K562 (cell line): ENCODE measurements at regions of chrX and their contacts with region 1.

Region 1: DNA sequence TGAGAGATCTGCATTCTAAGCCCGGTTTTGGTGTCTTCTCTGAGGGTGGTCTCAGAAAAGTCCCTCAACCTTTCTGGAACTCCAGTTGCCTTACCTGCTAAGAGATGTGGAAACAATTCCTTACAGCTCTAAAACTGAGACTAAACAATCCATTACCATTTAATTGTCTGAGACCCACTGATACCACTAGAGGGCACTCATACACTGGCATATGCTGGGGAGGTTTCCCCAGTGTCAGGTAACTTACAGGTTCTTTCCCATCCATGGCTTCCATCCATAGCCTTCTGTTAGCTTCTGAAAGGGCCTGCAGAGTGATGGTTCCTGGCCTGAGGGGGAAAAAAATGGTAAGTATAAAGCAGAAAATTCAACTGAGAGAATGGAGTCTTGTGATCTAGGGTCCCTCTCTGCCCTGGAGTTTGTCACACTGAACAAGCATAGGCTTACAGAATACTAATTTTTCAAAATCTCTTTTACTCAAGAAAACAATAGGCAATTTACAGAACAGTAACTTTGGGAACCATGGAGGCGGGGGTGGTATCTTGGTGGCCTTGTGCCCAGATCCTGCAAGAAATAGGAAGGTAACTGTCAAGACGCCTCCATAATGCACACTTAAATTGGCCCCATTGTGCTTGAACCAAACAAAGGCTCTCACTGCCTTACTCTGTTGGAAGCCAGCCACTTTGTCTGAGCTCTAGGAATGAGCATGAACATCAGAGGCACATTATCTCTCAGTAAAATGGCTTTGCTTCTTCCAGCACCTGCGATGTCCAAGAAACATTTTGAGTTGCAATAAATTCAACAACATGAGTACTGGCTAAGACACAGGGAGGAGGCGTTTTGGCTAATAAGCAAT is 236.1 kb downstream of the OPHN1 start:
- DNase-seq: peak; percentile 49 to 63 (median 58)
- ATAC-seq: peak; percentile 83
- H3K4me3 ChIP-seq: no peak overlapping the region
- H3K27ac ChIP-seq: no peak overlapping the region
- H3K4me1 ChIP-seq: no peaks in the 10 kb centered on the region
- H3K27me3 ChIP-seq: no peaks in the 10 kb centered on the region
- CTCF ChIP-seq: peak; percentile 64 to 76 (median 70)
- EP300 ChIP-seq: no peak
- POLR2A ChIP-seq: no peak
- RAD21 ChIP-seq: peak; percentile 76 to 88

Region 2: GRCh38 chrX:68163441-68163840 is 33.7 kb before region 1 on chrX:
- CTCF ChIA-PET with region 1: no interaction called
- POLR2A ChIA-PET with region 1: no interaction called
- in situ Hi-C with region 1: no loop called
- intact Hi-C with region 1: no loop called
- DNase-seq: no peak
- ATAC-seq: no peak
- H3K4me3 ChIP-seq: no peak overlapping the region
- H3K27ac ChIP-seq: no peak overlapping the region
- H3K4me1 ChIP-seq: no peaks in the 10 kb centered on the region; a peak in 1 of 5 replicates
- H3K27me3 ChIP-seq: no peaks in the 10 kb centered on the region
- CTCF ChIP-seq: no peak
- EP300 ChIP-seq: no peak
- POLR2A ChIP-seq: no peak
- RAD21 ChIP-seq: no peak

Region 3: DNA sequence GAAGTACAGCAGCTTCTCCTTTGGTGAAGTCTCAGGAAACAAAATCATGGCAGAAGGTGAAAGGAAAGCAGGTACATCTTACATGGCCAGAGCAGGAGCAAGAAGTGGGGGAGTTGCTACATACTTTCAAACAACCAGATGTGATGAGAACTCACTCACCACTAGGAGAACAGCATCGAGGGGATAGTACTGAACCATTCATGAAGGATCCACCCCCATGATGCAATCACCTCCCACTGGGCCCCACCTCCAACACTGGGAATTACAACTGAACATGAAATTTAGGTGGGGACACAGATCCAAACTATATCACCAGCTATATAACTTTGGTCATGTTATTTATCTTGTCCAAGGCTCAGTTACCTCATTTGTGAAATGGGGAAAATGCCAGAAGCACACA is 76.7 kb after region 1 on chrX:
- CTCF ChIA-PET with region 1: no interaction called
- POLR2A ChIA-PET with region 1: no interaction called
- in situ Hi-C with region 1: no loop called
- intact Hi-C with region 1: loop called (anchors 5 kb)
- DNase-seq: peak in 1 of 4 experiments; percentile 34
- ATAC-seq: peak; percentile 95
- H3K4me3 ChIP-seq: no peak overlapping the region
- H3K27ac ChIP-seq: no peak overlapping the region
- H3K4me1 ChIP-seq: no peaks in the 10 kb centered on the region
- H3K27me3 ChIP-seq: no peaks in the 10 kb centered on the region
- CTCF ChIP-seq: peak in 1 of 3 experiments; percentile 13; a peak in 1 of 6 replicates
- EP300 ChIP-seq: no peak
- POLR2A ChIP-seq: no peak
- RAD21 ChIP-seq: 0 out of 4 replicates have a peak, but pooled peaks of 1 of the 2 experiments have one; percentile 9

Region 4: DNA sequence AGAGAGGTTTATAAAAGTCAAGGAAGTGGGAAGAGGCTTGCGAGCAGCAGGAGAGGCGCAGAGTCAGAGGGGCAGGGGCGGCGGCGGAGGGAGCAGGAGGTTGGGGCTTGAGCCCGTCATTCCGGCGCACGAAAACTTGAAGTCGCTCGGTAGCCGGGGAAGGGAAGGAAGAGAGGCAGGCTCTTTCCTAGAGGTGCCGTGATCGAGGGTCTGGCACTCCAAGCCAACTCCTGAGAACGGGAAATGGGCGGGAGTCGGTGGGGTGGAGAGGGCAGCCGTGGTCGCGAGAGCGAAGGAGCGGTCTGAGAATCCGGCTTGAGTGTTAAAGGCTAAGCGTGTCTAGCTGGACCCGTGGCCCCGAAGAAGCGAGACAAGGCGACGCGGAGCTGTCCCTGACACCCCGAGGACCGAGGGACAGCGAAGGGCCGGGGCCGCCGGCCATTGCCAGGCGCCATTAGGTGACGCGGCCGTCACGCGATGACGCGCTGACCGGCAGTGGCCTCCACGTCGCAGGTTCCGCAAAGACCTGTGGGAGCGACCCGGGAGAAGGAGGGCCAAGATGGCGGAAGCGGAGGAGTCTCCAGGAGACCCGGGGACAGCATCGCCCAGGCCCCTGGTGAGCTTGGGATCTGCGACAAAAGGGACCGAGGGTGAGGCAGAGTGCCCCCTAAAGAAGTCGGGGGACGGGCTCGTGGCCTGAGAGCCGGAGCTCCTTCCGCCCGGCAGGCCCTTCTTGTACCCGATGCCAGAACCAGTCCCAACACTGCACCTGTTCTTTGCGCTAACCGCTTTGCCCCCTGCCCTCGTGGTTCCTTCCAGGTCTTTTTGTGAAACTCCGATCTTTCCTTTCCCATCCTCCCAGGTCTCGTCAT is 301.6 kb after region 1 on chrX and contains the start of gene YIPF6:
- CTCF ChIA-PET with region 1: no interaction called
- POLR2A ChIA-PET with region 1: interaction called, 5 read pairs
- in situ Hi-C with region 1: no loop called
- intact Hi-C with region 1: loop called (anchors 10 kb)
- DNase-seq: peak; percentile 74 to 88 (median 77)
- ATAC-seq: peak; percentile 97
- H3K4me3 ChIP-seq: peak within 1 kb of the TSS; percentile 88
- H3K27ac ChIP-seq: peak within 1 kb of the TSS; percentile 98
- H3K4me1 ChIP-seq: peaks cover 0 to 14% of the 10 kb centered on the region in 2 experiments; a peak in 4 of 5 replicates
- H3K27me3 ChIP-seq: no peaks in the 10 kb centered on the region
- CTCF ChIP-seq: 0 out of 6 replicates have a peak, but pooled peaks of 1 of the 3 experiments have one; percentile 4
- EP300 ChIP-seq: no peak
- POLR2A ChIP-seq: peak; percentile 97
- RAD21 ChIP-seq: no peak
- polyA plus RNA-seq, gene YIPF6: 31.3 to 44.2 TPM

Region 5: GRCh38 chrX:68719904-68720614 is 522.9 kb after region 1 on chrX:
- CTCF ChIA-PET with region 1: no interaction called
- POLR2A ChIA-PET with region 1: no interaction called
- in situ Hi-C with region 1: loop called (anchors 10 kb)
- intact Hi-C with region 1: no loop called
- DNase-seq: peak in 3 of 4 experiments; percentile 30 to 36 (median 33)
- ATAC-seq: peak; percentile 86
- H3K4me3 ChIP-seq: no peak overlapping the region
- H3K27ac ChIP-seq: no peak overlapping the region
- H3K4me1 ChIP-seq: 0 out of 5 replicates have a peak, but pooled peaks cover 0 to 4% of the 10 kb centered on the region in 2 experiments
- H3K27me3 ChIP-seq: no peaks in the 10 kb centered on the region
- CTCF ChIP-seq: peak; percentile 19 to 34 (median 26); a peak in 2 of 6 replicates
- EP300 ChIP-seq: no peak
- POLR2A ChIP-seq: no peak
- RAD21 ChIP-seq: no peak

Region 6: DNA sequence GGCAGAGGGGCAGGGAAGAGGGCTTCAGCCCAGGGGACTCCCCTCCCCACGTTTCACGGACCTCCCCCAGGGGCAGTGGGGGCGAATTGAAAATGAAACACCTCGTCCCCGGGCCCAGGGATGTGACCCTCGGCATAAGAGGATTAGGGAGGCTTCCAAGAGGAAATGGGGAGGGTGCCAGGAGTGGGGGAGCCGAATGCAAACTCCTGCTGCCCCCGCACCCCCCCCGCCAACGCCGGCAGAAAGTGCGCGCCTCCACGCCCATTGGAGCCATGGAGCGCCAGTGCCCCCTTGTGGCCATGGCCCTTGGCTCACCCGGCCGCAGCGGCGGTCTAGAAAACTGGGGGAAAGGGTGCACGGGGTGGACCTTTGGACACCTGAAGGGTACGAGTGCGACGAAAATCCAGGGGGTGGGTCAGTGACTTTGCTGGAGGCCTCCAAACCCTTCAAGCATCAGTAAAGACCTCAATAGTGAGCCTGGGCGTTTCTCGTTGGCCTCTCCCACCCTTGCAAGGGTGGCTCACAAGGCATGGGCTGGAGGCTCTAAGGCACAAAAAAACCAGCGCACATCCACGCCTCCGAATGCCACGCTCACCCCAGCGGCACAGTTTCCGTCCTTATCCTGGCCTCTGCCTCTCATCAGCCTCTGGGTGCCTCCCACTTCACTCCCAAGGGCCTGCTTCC is 1088.9 kb after region 1 on chrX:
- CTCF ChIA-PET with region 1: no interaction called
- POLR2A ChIA-PET with region 1: no interaction called
- in situ Hi-C with region 1: loop called (anchors 25 kb)
- intact Hi-C with region 1: no loop called
- DNase-seq: peak; percentile 53 to 81 (median 74)
- ATAC-seq: peak; percentile 96
- H3K4me3 ChIP-seq: no peak overlapping the region
- H3K27ac ChIP-seq: no peak overlapping the region
- H3K4me1 ChIP-seq: peaks cover 0 to 7% of the 10 kb centered on the region in 2 experiments; a peak in 2 of 5 replicates
- H3K27me3 ChIP-seq: peaks cover 0 to 6% of the 10 kb centered on the region in 2 experiments; a peak in 1 of 5 replicates
- CTCF ChIP-seq: peak; percentile 63 to 81 (median 74)
- EP300 ChIP-seq: no peak
- POLR2A ChIP-seq: no peak
- RAD21 ChIP-seq: peak; percentile 53 to 68